ENCODE measurements at regions of chr6 and their contacts with region 1.

Region 1: GRCh38 chr6:142833054-142833453 is 111.9 kb downstream of the HIVEP2 start:
- DNase-seq: no peak
- ATAC-seq: peak; percentile 36
- H3K4me3 ChIP-seq: no peak overlapping the region
- H3K4me3 Mint-ChIP-seq: no peak overlapping the region
- H3K27ac ChIP-seq: no peak overlapping the region
- H3K27ac Mint-ChIP-seq: peak overlapping the region; percentile 62
- H3K4me1 ChIP-seq: peaks cover 22% of the 10 kb centered on the region
- H3K4me1 Mint-ChIP-seq: peaks cover 78% of the 10 kb centered on the region
- H3K27me3 ChIP-seq: no peaks in the 10 kb centered on the region
- H3K27me3 Mint-ChIP-seq: no peaks in the 10 kb centered on the region
- CTCF ChIP-seq: no peak

Region 2: DNA sequence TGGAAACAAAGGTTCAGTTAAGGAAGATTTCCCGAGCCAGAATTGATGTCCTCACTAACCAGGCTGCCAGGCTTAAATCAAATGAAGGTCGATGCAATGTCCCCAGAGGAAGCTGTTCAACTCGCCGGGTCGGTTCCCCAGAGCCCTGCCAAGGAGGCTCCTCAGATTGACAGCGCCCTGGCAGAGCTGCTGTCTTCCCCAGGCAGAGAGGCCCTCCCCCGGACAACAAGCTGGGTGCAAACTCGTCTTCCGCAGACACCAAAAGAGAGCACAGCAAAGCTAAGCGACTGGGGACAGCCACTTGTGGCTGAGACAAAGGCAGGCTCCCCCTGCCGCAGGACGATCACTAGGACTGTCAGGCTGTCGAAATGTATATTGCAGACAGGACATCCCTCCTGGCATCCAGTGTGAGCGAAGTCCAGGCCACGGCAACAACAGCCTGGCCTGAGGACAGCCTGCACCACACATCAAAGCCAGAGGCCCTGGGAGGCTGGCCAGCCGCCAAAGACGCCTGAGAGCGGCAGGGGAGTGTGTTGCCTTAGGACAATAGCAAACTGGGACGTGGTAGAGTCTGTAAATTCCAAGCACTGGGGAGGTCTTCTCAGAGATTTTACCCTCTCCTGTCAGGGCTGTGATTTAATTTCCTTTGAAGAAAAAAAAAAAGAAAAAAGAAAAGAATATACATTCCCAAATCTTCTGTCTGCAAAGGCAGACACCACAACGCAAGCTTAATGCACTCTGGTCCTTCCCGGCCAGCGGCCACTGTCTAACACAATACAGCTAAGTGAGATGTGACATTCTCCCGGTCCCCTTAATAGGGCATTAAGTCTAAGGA is 12.8 kb after region 1 on chr6:
- CTCF ChIA-PET with region 1: interaction called, 6 read pairs
- POLR2A ChIA-PET with region 1: interaction called, 5 read pairs
- intact Hi-C with region 1: loop called in 1 of 2 experiments (anchors 1 kb)
- DNase-seq: peak in 8 of 9 experiments; percentile 42 to 84 (median 72)
- ATAC-seq: peak; percentile 43
- H3K4me3 ChIP-seq: peak overlapping the region; percentile 43 to 48
- H3K4me3 Mint-ChIP-seq: peak overlapping the region; percentile 87
- H3K27ac ChIP-seq: peak overlapping the region; percentile 66 to 82
- H3K27ac Mint-ChIP-seq: peak overlapping the region; percentile 97
- H3K4me1 ChIP-seq: peaks cover 80% of the 10 kb centered on the region
- H3K4me1 Mint-ChIP-seq: peaks cover 92% of the 10 kb centered on the region
- H3K27me3 ChIP-seq: no peaks in the 10 kb centered on the region
- H3K27me3 Mint-ChIP-seq: no peaks in the 10 kb centered on the region
- CTCF ChIP-seq: no peak

Measured in CD8-positive, alpha-beta T cell (primary cell).